Lower leg skin (tissue), 4 donors: ENCODE measurements at regions of chr10 and their contacts with region 1.

Region 1: DNA sequence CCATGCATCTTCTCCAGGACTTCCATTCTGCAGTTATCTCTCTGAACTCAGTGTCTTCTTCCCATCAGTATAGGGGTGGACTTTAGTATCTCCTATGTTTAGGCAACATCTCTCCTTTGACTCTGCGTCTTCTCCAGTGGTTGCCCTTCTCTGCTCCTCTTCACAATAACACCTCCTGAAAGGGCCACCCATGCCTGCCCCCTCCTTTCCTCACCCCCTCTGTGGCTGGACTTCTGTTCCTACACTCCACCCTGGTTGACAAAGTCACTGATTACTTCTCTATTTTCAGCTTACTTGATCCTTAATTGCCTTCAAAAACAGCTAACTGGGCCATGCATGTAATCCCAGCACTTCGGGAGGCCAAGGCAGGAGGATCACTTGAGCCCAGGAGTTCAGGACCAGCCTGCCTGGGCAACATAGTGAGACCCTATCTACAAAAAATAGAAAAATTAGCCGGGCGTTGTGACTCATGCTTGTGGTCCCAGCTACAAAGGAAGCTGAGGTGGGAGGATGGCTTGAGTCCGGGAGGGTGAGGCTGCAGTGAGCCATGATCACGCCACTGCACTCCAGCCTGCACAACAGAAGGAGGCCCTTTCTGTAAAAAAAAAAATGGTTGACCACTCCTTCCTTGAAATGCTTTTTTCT is 13.7 kb downstream of the SRGN start:
- DNase-seq: peak in 1 of 2 donors; percentile 81
- H3K4me3 ChIP-seq: no peak overlapping the region
- CTCF ChIP-seq: no peak
- POLR2A ChIP-seq: no peak

Region 2: DNA sequence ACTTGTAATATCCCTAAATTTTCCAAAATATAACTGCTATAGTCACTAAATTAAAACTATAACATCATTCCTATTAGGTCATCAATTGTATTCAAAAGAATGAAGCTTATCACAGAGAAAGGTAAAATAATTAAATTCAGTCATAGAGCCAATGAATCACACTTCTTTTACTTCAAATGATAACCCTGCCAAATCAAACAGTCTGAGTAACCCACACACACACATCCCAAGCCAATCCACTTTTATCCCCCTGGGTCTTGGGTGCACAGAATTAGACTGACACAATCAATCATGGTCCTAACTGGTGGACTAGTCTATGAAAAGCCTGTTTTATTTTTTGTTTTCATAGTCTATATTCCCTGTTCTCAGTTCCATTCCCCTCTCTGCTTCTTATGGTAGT is 1431.2 kb before region 1 on chr10:
- intact Hi-C with region 1: no loop called
- DNase-seq: no peak
- H3K4me3 ChIP-seq: no peak overlapping the region
- CTCF ChIP-seq: no peak
- POLR2A ChIP-seq: no peak

Region 3: GRCh38 chr10:69014171-69014570 is 87.4 kb before region 1 on chr10:
- intact Hi-C with region 1: loop called (anchors 10 kb)
- DNase-seq: no peak
- H3K4me3 ChIP-seq: no peak overlapping the region
- CTCF ChIP-seq: no peak
- POLR2A ChIP-seq: no peak